Calu3 (cell line): ENCODE measurements at regions of chr14 and their contacts with region 1.

Region 1: DNA sequence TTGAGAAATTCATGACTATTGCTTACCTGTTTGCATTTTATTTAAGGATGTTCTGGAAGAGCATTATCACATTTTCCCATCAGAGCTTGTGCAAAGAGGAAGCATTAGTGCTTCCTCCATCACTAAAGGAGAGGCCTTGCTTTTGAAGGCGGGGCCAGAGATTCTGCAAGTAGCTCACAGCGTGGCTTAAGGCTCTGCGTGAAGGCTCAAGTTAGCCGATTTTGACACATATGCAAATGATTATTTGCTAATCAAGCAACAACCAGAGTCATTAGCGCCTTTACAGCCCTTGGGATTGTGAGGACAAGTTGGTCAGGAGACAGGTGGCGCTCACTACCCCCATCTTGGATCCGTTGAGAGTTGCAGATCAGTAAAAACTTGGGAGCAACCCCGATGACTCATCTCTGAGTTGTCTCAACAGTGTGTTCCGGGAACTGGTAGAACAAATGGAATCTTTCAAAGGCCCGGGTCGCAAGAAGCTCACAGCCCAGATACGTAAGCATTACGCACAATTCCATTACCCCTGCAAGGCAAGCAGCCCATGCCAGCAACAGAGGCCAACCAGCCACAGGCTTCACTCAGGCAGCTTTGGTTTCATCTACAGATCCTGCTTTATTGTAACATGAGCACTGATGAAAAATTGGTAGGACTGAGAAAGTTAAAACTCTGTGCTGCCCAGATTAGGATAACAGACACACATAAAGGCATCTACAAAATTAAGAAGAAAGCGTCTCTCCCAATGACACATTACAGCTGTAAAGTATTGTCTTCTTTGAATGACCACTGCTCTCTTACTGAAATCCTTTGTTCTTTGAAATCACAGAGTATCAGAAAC is 34.9 kb upstream of the SPTSSA start:
- DNase-seq: peak; percentile 81
- H3K4me3 Mint-ChIP-seq: peak overlapping the region; percentile 63
- H3K27ac Mint-ChIP-seq: peak overlapping the region; percentile 99
- H3K4me1 Mint-ChIP-seq: peaks cover 15% of the 10 kb centered on the region
- H3K27me3 Mint-ChIP-seq: no peaks in the 10 kb centered on the region
- CTCF ChIP-seq: no peak

Region 2: DNA sequence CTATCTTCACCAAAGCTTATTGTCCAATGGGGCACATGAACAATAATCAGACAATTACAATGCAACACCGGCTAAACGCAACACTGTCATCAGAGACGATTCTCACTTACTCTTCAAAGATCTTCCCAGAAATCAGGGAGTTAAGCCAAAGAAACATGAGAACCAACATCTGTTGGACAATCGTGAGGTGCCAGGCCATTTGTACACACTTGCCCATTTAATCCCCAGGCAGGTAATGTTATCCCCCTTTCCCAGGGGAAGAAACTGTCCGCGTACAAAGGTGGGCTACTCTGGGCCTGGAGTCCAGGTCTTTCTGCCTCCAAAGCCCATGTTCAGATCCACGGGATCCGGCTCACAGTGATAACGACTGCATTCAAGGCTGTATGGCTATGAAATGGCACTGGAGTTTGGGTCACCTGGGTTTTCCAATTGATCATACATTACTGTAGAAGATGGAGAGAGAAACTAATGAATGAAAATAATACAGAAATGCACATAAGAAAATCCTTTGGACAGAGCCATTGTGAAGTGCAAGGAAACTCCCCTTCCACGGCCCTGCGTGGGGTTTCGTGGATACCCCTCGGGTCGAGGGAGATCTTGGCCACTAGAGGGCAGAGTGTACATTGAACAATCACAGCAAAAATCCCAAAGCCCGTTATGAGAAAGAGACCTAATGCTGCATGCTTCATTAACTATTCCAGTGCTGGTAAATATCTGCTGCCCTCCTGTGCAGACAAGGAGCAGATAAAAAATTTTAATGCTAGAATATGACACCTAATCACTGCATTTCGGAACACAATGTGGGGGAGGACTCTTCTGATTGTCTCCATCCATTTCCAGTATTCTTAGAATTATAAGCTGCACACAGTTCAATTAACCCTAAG is 657.5 kb before region 1 on chr14:
- CTCF ChIA-PET with region 1: no interaction called
- intact Hi-C with region 1: loop called (anchors 5 kb)
- DNase-seq: peak; percentile 46
- H3K4me3 Mint-ChIP-seq: no peak overlapping the region
- H3K27ac Mint-ChIP-seq: no peak overlapping the region
- H3K4me1 Mint-ChIP-seq: no peaks in the 10 kb centered on the region
- H3K27me3 Mint-ChIP-seq: no peaks in the 10 kb centered on the region
- CTCF ChIP-seq: peak; percentile 80

Region 3: DNA sequence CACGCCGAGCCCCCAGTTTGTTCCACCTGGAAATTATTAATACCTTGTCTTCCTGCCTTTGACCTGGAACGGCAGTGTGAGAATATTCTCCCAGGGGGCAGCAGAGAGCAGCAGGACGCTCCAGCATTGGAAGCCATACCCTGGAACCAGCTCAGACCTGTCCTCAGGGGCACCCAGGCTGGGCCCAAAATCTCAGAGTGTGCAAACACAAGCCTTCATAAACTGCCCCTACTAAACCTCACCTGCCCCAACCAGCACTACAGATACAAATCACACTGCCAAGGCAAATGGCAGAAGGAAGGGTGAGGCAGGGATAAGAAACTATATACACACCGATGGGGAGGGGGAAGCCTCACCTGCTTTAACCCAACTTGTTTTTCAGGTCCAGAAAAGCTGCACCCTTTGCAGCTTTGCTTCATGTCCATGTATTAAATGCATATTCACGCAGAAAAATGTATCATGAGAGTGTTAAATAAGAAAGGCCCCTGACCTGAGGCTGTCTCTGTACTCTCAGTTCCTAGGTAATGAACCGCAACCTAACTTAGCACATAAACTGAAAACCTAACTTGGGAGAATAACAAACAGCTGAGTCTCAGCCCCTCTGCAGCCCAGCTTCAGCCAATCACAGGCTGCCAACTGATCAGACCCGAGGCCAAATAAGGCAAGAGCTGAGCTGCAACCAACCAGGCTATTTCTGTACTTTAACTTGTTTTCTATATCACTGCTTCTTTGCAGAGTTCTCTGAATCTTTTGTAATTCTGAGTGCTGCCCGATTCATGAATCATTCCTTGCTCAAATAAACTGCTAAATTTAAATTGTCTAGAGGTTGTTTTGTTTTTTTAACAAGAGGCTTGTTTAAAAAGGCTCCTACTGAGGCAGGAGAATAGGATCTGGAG is 164.9 kb before region 1 on chr14:
- CTCF ChIA-PET with region 1: interaction called, 43 read pairs
- intact Hi-C with region 1: loop called (anchors 1 kb)
- DNase-seq: peak; percentile 84
- H3K4me3 Mint-ChIP-seq: no peak overlapping the region
- H3K27ac Mint-ChIP-seq: peak overlapping the region; percentile 72
- H3K4me1 Mint-ChIP-seq: peaks cover 16% of the 10 kb centered on the region
- H3K27me3 Mint-ChIP-seq: no peaks in the 10 kb centered on the region
- CTCF ChIP-seq: peak; percentile 65

Region 4: GRCh38 chr14:34365309-34365915 is 131.5 kb before region 1 on chr14:
- CTCF ChIA-PET with region 1: interaction called, 6 read pairs
- intact Hi-C with region 1: loop called (anchors 5 kb)
- DNase-seq: no peak
- H3K4me3 Mint-ChIP-seq: no peak overlapping the region
- H3K27ac Mint-ChIP-seq: peak overlapping the region; percentile 31
- H3K4me1 Mint-ChIP-seq: peaks cover 49% of the 10 kb centered on the region
- H3K27me3 Mint-ChIP-seq: no peaks in the 10 kb centered on the region
- CTCF ChIP-seq: no peak

Region 5: DNA sequence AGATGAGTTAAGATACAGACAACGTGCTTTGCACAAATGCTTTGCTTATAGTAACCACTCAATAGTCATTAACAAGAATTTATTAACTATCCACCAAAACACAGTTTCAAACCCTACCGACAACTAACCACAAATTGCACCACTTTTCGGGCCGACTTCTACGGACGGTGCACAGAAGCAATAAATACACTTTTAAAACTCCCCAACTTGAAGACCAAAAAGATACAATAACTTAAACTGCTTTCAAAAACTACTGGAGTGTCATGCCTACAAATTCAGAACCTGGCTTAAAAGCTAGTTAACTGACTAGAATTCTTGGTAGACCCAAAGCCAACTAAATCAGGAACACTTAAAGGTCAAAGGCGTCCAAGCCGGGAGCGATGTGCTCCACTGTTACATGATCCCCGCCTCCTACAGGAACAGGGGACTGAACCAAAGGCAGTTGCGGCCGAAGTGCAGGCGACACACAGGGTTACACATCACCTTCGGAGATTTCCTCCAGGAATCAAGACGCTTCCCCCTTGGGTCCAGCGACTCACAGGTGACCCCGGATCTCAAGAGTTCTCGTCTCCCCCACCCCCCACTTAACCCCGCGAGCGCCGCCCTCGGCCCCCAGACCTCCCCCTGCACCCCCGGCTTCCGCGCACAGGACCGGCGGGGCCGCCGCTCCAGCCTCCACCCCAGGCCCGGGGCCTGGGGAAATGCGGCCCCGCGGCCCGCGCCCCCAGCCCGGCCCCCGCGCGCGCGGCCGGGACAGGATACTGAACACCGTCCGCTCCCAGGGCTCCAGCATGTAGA is 35.4 kb before region 1 on chr14:
- CTCF ChIA-PET with region 1: interaction called, 6 read pairs
- intact Hi-C with region 1: loop called (anchors 5 kb)
- DNase-seq: peak; percentile 51
- H3K4me3 Mint-ChIP-seq: peak overlapping the region; percentile 82
- H3K27ac Mint-ChIP-seq: peak overlapping the region; percentile 78
- H3K4me1 Mint-ChIP-seq: no peaks in the 10 kb centered on the region
- H3K27me3 Mint-ChIP-seq: no peaks in the 10 kb centered on the region
- CTCF ChIP-seq: no peak

Region 6: GRCh38 chr14:34665785-34666435 is 169.0 kb after region 1 on chr14:
- CTCF ChIA-PET with region 1: no interaction called
- intact Hi-C with region 1: no loop called
- DNase-seq: no peak
- H3K4me3 Mint-ChIP-seq: no peak overlapping the region
- H3K27ac Mint-ChIP-seq: no peak overlapping the region
- H3K4me1 Mint-ChIP-seq: no peaks in the 10 kb centered on the region
- H3K27me3 Mint-ChIP-seq: no peaks in the 10 kb centered on the region
- CTCF ChIP-seq: no peak